ENCODE measurements at regions of chr15 and their contacts with region 1.

Region 1: DNA sequence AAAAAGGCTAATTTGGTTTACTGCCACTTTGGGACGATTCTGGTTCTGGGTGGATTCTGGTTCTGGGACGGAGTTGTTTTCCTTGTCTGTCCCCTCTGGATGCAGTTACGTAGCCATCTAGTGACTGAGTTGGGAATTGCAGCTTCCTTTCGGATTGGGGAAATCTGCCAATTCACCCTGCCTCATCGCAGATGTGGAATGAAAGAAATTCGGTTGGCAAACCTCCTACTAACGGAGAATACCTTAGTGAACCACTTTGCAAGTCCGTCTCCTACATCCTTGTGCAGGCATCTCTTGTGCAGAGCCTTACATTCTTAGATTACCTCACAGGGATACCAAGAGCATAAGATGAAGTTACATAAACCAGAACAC is 31.5 kb upstream of the AP4E1 start:
- DNase-seq: peak; percentile 95
- H3K4me3 ChIP-seq: peak overlapping the region; percentile 42 to 53 (median 46)
- H3K27ac ChIP-seq: peak overlapping the region in 2 of 4 donors; percentile 44 to 46
- H3K4me1 ChIP-seq: peaks cover 2 to 14% (median 11%) of the 10 kb centered on the region in 4 donors
- H3K27me3 ChIP-seq: no peaks in the 10 kb centered on the region
- CTCF ChIP-seq: peak in 2 of 3 experiments; percentile 95 to 97
- EP300 ChIP-seq: no peak
- POLR2A ChIP-seq: no peak

Region 2: GRCh38 chr15:50675536-50676144 is 201.3 kb before region 1 on chr15:
- intact Hi-C with region 1: loop called (anchors 2 kb)
- DNase-seq: no peak
- H3K4me3 ChIP-seq: no peak overlapping the region
- H3K27ac ChIP-seq: no peak overlapping the region
- H3K4me1 ChIP-seq: peaks cover 18 to 27% (median 23%) of the 10 kb centered on the region in 4 donors
- H3K27me3 ChIP-seq: no peaks in the 10 kb centered on the region
- CTCF ChIP-seq: peak; percentile 79 to 92 (median 82)
- EP300 ChIP-seq: no peak
- POLR2A ChIP-seq: no peak

Region 3: GRCh38 chr15:50825946-50826345 is 51.0 kb before region 1 on chr15:
- intact Hi-C with region 1: no loop called
- DNase-seq: no peak
- H3K4me3 ChIP-seq: no peak overlapping the region
- H3K27ac ChIP-seq: no peak overlapping the region
- H3K4me1 ChIP-seq: no peaks in the 10 kb centered on the region
- H3K27me3 ChIP-seq: no peaks in the 10 kb centered on the region
- CTCF ChIP-seq: no peak
- EP300 ChIP-seq: no peak
- POLR2A ChIP-seq: no peak

Measured in esophagus muscularis mucosa (tissue), 4 donors.